ENCODE measurements at regions of chr2 and their contacts with region 1.

Region 1: GRCh38 chr2:96715658-96716057 is 24.2 kb downstream of the LMAN2L start:
- DNase-seq: no peak
- H3K4me3 ChIP-seq: no peak overlapping the region
- H3K27me3 ChIP-seq: no peaks in the 10 kb centered on the region
- CTCF ChIP-seq: no peak

Region 2: DNA sequence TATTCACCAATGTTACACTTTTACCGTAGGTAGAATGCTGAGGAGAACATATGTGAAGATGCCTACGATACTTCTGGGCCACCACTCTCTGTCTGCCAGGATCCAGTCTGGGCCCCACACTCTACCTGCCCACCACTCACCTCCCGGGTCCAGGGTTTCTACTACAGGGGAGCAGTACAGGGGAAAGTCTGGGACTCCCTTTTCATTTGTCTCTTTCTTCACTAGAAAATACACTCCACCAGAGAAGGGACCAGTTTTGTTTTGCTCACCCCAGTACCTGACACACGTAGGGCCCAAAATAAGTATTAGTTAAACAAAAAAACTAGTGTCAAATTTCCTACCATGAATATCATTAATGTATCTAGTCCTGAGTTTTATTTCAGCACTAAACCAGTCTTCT is 98.6 kb before region 1 on chr2:
- CTCF ChIA-PET with region 1: no interaction called
- POLR2A ChIA-PET with region 1: interaction called, 12 read pairs
- DNase-seq: no peak
- H3K4me3 ChIP-seq: no peak overlapping the region
- H3K27me3 ChIP-seq: no peaks in the 10 kb centered on the region
- CTCF ChIP-seq: no peak